WTC11 (cell line): ENCODE measurements at regions of chr7 and their contacts with region 1.

Region 1: DNA sequence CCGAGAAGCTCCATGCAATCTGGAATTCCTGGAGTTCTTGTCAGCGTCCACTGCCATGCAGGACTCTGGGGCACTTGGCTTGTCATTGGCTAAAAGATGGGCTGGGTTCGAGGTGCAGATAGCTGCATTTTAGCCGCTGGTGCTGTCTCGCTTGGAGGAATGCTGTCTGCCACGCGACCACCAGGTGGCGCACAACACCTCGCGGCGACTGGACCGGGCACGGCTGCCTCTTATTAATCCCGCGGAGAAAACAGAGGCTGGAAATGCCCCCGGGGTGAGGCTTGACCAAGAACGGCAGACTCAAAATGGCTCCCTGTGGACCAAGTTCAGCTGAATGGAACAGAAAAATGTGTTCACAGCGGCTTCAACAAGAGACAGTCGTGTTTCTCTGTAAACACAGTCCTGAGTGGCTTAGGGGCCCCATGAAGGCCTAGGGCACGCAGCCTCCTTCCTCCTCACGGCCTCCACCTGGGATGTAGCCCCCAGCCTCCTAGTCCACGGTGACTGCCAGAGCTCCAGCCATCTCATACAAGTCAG is 46.2 kb downstream of the AOC1 start:
- DNase-seq: peak; percentile 86
- ATAC-seq: peak; percentile 75
- H3K4me3 Mint-ChIP-seq: no peak overlapping the region
- H3K27ac Mint-ChIP-seq: no peak overlapping the region
- H3K4me1 Mint-ChIP-seq: peaks cover 37% of the 10 kb centered on the region
- H3K27me3 Mint-ChIP-seq: peaks cover 59% of the 10 kb centered on the region
- CTCF ChIP-seq: peak; percentile 90

Region 2: GRCh38 chr7:150909200-150909995 is 10.9 kb after region 1 on chr7:
- CTCF ChIA-PET with region 1: interaction called, 38 read pairs
- POLR2A ChIA-PET with region 1: no interaction called
- DNase-seq: no peak
- ATAC-seq: no peak
- H3K4me3 Mint-ChIP-seq: no peak overlapping the region
- H3K27ac Mint-ChIP-seq: no peak overlapping the region
- H3K4me1 Mint-ChIP-seq: peaks cover 11% of the 10 kb centered on the region
- H3K27me3 Mint-ChIP-seq: peaks cover 15% of the 10 kb centered on the region
- CTCF ChIP-seq: no peak

Region 3: GRCh38 chr7:150931199-150931869 is 32.8 kb after region 1 on chr7:
- CTCF ChIA-PET with region 1: interaction called, 13 read pairs
- POLR2A ChIA-PET with region 1: interaction called, 3 read pairs
- DNase-seq: no peak
- ATAC-seq: no peak
- H3K4me3 Mint-ChIP-seq: no peak overlapping the region
- H3K27ac Mint-ChIP-seq: no peak overlapping the region
- H3K4me1 Mint-ChIP-seq: no peaks in the 10 kb centered on the region
- H3K27me3 Mint-ChIP-seq: no peaks in the 10 kb centered on the region
- CTCF ChIP-seq: no peak

Region 4: GRCh38 chr7:150955519-150956394 is 57.2 kb after region 1 on chr7:
- CTCF ChIA-PET with region 1: interaction called, 12 read pairs
- POLR2A ChIA-PET with region 1: no interaction called
- DNase-seq: peak; percentile 60
- ATAC-seq: peak; percentile 53
- H3K4me3 Mint-ChIP-seq: no peak overlapping the region
- H3K27ac Mint-ChIP-seq: peak overlapping the region; percentile 76; the same call in 1 of the 2 replicates
- H3K4me1 Mint-ChIP-seq: peaks cover 7% of the 10 kb centered on the region
- H3K27me3 Mint-ChIP-seq: no peaks in the 10 kb centered on the region
- CTCF ChIP-seq: no peak

Region 5: DNA sequence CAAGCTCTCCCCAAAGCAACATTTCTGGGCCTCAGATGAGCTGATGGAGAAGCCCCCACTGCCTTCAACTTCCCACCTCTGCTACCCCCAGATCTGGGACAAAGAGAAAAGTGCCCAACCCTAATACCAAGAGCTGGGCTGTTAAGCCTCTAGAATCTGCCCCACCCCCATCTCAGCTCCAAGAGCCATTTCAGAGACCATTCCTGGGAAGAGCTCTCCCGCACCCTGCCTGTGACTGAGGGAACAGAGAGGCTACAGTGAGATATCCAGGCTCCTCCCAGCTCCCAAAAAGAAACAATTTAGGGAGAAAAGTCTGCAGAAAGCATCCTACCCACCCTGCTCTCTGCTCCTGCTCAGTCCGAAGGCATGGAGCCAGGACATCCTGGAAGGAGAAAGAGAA is 82.1 kb after region 1 on chr7:
- CTCF ChIA-PET with region 1: interaction called, 26 read pairs
- POLR2A ChIA-PET with region 1: interaction called, 3 read pairs
- DNase-seq: peak; percentile 50
- ATAC-seq: peak; percentile 8
- H3K4me3 Mint-ChIP-seq: no peak overlapping the region
- H3K27ac Mint-ChIP-seq: no peak overlapping the region
- H3K4me1 Mint-ChIP-seq: peaks cover 35% of the 10 kb centered on the region
- H3K27me3 Mint-ChIP-seq: peaks cover 74% of the 10 kb centered on the region
- CTCF ChIP-seq: no peak

Region 6: DNA sequence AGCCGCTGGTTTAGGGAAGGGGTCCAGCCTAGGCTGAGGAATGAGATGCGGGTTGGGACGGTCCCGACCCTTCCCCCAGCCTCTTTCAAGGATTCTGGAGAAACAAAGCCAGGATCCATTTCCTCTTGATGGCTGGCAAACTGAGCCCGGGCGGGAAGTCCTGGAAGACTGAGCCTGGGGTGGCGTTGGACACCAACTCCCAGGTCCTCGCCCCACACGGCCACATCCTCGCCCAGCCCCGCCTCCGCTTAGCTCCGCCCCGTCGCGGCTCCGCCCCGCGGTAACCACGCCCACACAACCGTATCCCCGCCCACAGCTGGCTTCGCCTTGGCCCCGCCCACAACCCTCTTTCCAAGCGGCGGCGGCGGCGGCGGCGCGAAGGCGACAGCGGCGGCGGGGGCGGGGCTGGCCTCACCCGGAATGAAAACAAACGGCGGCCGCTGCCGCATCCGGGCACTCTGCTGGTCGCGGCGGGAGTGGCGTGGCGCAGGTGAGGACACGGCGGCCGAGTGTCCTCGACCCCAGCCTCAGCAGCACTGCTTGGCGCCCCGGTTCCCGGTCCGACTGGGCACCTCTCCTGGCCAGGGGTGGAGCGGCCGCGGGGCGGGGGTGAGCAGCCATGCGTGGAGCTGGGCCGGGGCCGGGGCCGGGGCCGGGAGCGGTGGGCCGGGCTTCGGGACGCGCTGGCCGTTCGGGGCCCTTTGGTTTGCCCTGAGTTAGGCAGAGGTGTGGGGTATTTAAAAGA is 443.0 kb after region 1 on chr7 and contains the start of gene NUB1:
- CTCF ChIA-PET with region 1: no interaction called
- POLR2A ChIA-PET with region 1: no interaction called
- DNase-seq: peak; percentile 93
- ATAC-seq: peak; percentile 97
- H3K4me3 Mint-ChIP-seq: peak within 1 kb of the TSS; percentile 76
- H3K27ac Mint-ChIP-seq: peak within 1 kb of the TSS; percentile 76; the same call in 1 of the 2 replicates
- H3K4me1 Mint-ChIP-seq: peaks cover 3% of the 10 kb centered on the region; the same call in 1 of the 2 replicates
- H3K27me3 Mint-ChIP-seq: peaks cover 14% of the 10 kb centered on the region
- CTCF ChIP-seq: no peak
- total RNA-seq, gene NUB1: 31.2 to 38.3 TPM (median 33.5 TPM) in 3 replicates